ENCODE measurements at regions of chr14 and their contacts with region 1.

Region 1: GRCh38 chr14:32202998-32203882 is at the start of gene RNU6-8:
- DNase-seq: peak; percentile 90
- ATAC-seq: peak; percentile 86
- H3K4me3 Mint-ChIP-seq: peak within 1 kb of the TSS; percentile 87
- H3K27ac Mint-ChIP-seq: peak within 1 kb of the TSS; percentile 100
- H3K4me1 Mint-ChIP-seq: peaks cover 48% of the 10 kb centered on the region
- H3K27me3 Mint-ChIP-seq: peaks cover 3% of the 10 kb centered on the region
- total RNA-seq, gene RNU6-8: not detected

Region 2: GRCh38 chr14:31026395-31027118 is 1176.7 kb before region 1 on chr14:
- CTCF ChIA-PET with region 1: no interaction called
- POLR2A ChIA-PET with region 1: no interaction called
- intact Hi-C with region 1: loop called in 1 of 2 experiments (anchors 5 kb)
- DNase-seq: peak; percentile 95
- ATAC-seq: peak; percentile 91
- H3K4me3 Mint-ChIP-seq: peak overlapping the region; percentile 83
- H3K27ac Mint-ChIP-seq: peak overlapping the region; percentile 90
- H3K4me1 Mint-ChIP-seq: peaks cover 55% of the 10 kb centered on the region
- H3K27me3 Mint-ChIP-seq: no peaks in the 10 kb centered on the region

Region 3: GRCh38 chr14:31420319-31421111 is 782.7 kb before region 1 on chr14 and contains the start of gene HEATR5A:
- CTCF ChIA-PET with region 1: no interaction called
- POLR2A ChIA-PET with region 1: no interaction called
- intact Hi-C with region 1: loop called in 1 of 2 experiments (anchors 1 kb)
- DNase-seq: peak; percentile 94
- ATAC-seq: peak; percentile 91
- H3K4me3 Mint-ChIP-seq: peak within 1 kb of the TSS; percentile 94
- H3K27ac Mint-ChIP-seq: peak within 1 kb of the TSS; percentile 88
- H3K4me1 Mint-ChIP-seq: peaks cover 25% of the 10 kb centered on the region
- H3K27me3 Mint-ChIP-seq: peaks cover 3% of the 10 kb centered on the region
- total RNA-seq, gene HEATR5A: 8.5 to 9.4 TPM

Region 4: GRCh38 chr14:31561155-31561846 is 641.9 kb before region 1 on chr14 and contains the start of gene NUBPL:
- CTCF ChIA-PET with region 1: no interaction called
- POLR2A ChIA-PET with region 1: no interaction called
- intact Hi-C with region 1: loop called (anchors 1 to 10 kb)
- DNase-seq: peak; percentile 98
- ATAC-seq: peak; percentile 96
- H3K4me3 Mint-ChIP-seq: peak within 1 kb of the TSS; percentile 92
- H3K27ac Mint-ChIP-seq: peak within 1 kb of the TSS; percentile 95
- H3K4me1 Mint-ChIP-seq: peaks cover 23% of the 10 kb centered on the region
- H3K27me3 Mint-ChIP-seq: peaks cover 6% of the 10 kb centered on the region
- total RNA-seq, gene NUBPL: 9.5 to 14.9 TPM

Region 5: GRCh38 chr14:32190672-32191071 is 12.6 kb before region 1 on chr14:
- CTCF ChIA-PET with region 1: interaction called, 3 read pairs
- POLR2A ChIA-PET with region 1: no interaction called
- intact Hi-C with region 1: loop called in 1 of 2 experiments (anchors 1 kb)
- DNase-seq: no peak
- ATAC-seq: no peak
- H3K4me3 Mint-ChIP-seq: no peak overlapping the region
- H3K27ac Mint-ChIP-seq: no peak overlapping the region
- H3K4me1 Mint-ChIP-seq: peaks cover 18% of the 10 kb centered on the region
- H3K27me3 Mint-ChIP-seq: peaks cover 9% of the 10 kb centered on the region